ENCODE measurements at regions of chr11 and their contacts with region 1.

Region 1: GRCh38 chr11:112588252-112588694 is 327.6 kb upstream of the PLET1 start:
- DNase-seq: peak; percentile 59
- H3K4me3 Mint-ChIP-seq: no peak overlapping the region
- H3K27ac Mint-ChIP-seq: no peak overlapping the region
- H3K4me1 Mint-ChIP-seq: no peaks in the 10 kb centered on the region
- H3K27me3 Mint-ChIP-seq: no peaks in the 10 kb centered on the region
- CTCF ChIP-seq: no peak

Region 2: DNA sequence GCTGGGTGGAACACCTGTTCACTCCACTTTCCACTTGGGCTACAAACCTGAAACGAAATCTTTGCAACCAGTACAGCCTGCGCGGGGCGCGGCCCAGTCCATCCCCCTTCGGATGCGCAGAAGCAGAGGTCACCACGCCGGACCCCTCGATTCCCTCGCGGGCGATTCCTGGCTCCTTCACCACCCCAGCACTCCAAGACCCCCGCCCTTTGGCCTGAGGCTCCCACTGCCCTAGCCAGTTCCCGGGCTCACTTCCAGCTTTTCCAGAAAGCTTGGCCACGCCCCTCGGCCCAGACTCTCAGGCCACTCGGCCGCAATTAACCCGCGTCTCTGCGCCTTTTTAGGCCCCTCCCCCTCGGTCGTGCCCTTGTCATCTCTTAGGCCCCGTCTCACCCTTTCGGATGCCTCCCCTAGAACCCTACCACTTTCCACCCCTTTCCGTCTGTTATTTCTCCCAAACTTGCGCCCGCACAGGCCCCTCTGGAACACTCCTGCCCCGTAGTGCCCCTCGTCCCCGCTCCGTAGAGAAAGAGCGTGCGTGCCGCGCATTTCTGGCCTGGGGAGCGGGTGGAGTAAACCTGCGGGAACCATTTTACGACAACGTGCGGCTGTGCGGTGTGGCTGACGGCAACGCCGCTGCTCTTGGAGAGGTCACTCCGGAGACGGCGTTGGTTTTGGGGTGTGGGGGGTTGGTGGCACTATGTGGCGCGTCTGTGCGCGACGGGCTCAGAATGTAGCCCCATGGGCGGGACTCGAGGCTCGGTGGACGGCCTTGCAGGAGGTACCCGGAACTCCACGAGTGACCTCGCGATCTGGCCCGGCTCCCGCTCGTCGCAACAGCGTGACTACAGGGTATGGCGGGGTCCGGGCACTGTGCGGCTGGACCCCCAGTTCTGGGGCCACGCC is 563.2 kb before region 1 on chr11 and contains the start of gene DLAT:
- CTCF ChIA-PET with region 1: no interaction called
- intact Hi-C with region 1: no loop called
- DNase-seq: peak; percentile 75
- H3K4me3 Mint-ChIP-seq: peak within 1 kb of the TSS; percentile 93
- H3K27ac Mint-ChIP-seq: peak within 1 kb of the TSS; percentile 80
- H3K4me1 Mint-ChIP-seq: no peaks in the 10 kb centered on the region
- H3K27me3 Mint-ChIP-seq: no peaks in the 10 kb centered on the region
- CTCF ChIP-seq: no peak
- total RNA-seq, gene DLAT: 25.4 and 27.4 TPM in 2 replicates

Region 3: GRCh38 chr11:112219476-112220232 is 368.6 kb before region 1 on chr11:
- CTCF ChIA-PET with region 1: no interaction called
- intact Hi-C with region 1: loop called (anchors 2 kb)
- DNase-seq: peak; percentile 33
- H3K4me3 Mint-ChIP-seq: no peak overlapping the region
- H3K27ac Mint-ChIP-seq: no peak overlapping the region
- H3K4me1 Mint-ChIP-seq: peaks cover 8% of the 10 kb centered on the region
- H3K27me3 Mint-ChIP-seq: no peaks in the 10 kb centered on the region
- CTCF ChIP-seq: peak; percentile 44

Region 4: GRCh38 chr11:112321521-112322172 is 266.6 kb before region 1 on chr11:
- CTCF ChIA-PET with region 1: no interaction called
- intact Hi-C with region 1: no loop called
- DNase-seq: peak; percentile 73
- H3K4me3 Mint-ChIP-seq: no peak overlapping the region
- H3K27ac Mint-ChIP-seq: no peak overlapping the region
- H3K4me1 Mint-ChIP-seq: peaks cover 38% of the 10 kb centered on the region
- H3K27me3 Mint-ChIP-seq: no peaks in the 10 kb centered on the region
- CTCF ChIP-seq: no peak

Region 5: GRCh38 chr11:112537026-112537425 is 51.2 kb before region 1 on chr11:
- CTCF ChIA-PET with region 1: no interaction called
- intact Hi-C with region 1: no loop called
- DNase-seq: no peak
- H3K4me3 Mint-ChIP-seq: no peak overlapping the region
- H3K27ac Mint-ChIP-seq: no peak overlapping the region
- H3K4me1 Mint-ChIP-seq: no peaks in the 10 kb centered on the region
- H3K27me3 Mint-ChIP-seq: peaks cover 30% of the 10 kb centered on the region
- CTCF ChIP-seq: no peak

Region 6: DNA sequence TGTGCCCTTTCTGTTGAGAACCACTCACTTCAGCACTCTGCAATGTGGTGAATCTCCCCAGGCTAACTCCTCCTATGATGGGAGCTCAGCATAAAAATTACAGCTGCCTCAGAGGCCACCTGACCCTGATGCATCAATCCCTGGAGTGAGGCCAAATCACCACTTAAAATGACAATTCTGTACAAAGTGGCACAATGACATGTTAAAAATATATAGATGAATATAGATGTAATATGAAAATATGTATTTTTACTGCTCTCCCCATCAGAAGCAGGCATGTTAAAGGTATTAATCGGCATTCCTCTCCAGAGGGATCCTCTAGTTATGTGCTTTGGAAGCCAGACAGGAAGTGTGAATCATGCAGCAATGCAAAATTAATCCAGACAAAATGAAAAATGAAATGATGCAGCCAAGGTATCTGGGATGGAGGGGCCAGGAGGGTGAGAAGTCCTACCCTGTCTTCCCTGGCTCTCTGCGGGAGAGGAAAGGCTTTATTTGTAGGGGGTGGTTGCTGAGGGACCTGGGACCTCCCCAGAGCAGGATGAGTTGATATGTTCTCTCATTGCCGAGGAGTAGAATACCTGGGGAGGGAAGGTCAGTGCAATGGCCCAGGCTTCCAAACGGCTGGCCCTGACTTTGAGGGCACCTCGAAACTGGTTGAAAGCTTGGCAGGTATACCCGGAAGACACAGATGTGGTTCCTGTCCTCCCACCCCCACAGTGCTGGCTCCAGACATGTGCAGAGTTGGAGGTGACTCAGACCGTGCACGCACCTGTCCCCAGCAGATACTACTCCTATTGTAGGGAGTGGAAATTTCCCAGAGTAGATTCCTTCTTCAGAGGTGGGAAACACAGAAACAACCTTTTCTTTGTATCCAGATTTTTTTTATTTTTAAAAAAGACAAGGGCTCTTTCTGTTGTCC is 25.0 kb after region 1 on chr11:
- CTCF ChIA-PET with region 1: interaction called, 12 read pairs
- intact Hi-C with region 1: no loop called
- DNase-seq: peak; percentile 88
- H3K4me3 Mint-ChIP-seq: peak overlapping the region; percentile 50
- H3K27ac Mint-ChIP-seq: peak overlapping the region; percentile 98
- H3K4me1 Mint-ChIP-seq: peaks cover 58% of the 10 kb centered on the region
- H3K27me3 Mint-ChIP-seq: no peaks in the 10 kb centered on the region
- CTCF ChIP-seq: no peak

Region 7: GRCh38 chr11:112762707-112763090 is 174.4 kb after region 1 on chr11:
- CTCF ChIA-PET with region 1: no interaction called
- intact Hi-C with region 1: no loop called
- DNase-seq: no peak
- H3K4me3 Mint-ChIP-seq: no peak overlapping the region
- H3K27ac Mint-ChIP-seq: no peak overlapping the region
- H3K4me1 Mint-ChIP-seq: peaks cover 4% of the 10 kb centered on the region
- H3K27me3 Mint-ChIP-seq: no peaks in the 10 kb centered on the region
- CTCF ChIP-seq: no peak

Region 8: GRCh38 chr11:112795142-112795815 is 207.0 kb after region 1 on chr11:
- CTCF ChIA-PET with region 1: interaction called, 36 read pairs
- intact Hi-C with region 1: loop called (anchors 1 kb)
- DNase-seq: peak; percentile 70
- H3K4me3 Mint-ChIP-seq: no peak overlapping the region
- H3K27ac Mint-ChIP-seq: no peak overlapping the region
- H3K4me1 Mint-ChIP-seq: peaks cover 9% of the 10 kb centered on the region
- H3K27me3 Mint-ChIP-seq: no peaks in the 10 kb centered on the region
- CTCF ChIP-seq: no peak

Region 9: DNA sequence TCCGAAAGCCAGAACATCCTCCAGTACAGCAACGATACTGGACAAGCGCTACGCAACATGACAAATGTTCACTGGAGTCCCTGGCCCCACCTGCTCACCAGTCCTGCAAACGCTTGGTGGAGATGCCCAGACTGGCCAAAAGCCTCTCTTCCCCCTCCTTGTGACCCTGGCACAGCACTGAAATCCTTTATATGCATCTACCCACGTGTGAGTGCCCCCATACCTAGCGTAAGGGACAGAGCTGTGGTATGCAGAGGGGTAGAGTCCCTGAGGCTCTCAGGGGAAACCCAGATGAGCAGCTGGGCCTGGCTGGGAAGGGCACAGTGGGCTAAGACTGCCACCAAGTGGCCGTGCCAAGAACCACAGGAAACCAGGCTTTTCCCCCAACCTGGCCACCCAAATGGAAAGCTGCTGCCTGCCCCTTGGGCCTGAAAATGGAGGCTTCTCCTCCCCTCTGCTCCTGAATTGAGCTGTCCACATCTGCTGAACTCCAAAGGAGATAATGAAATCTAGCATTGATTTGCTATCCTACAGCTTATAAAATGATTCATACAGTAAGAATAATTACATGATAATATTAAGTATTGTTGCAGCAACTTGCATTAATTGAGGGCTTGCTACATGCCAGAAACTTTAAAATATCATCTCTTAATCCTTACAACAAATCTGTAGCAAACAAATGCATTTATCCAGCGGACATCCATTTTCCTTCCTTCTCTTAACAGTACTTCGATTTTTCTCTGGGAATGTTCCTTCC is 701.3 kb after region 1 on chr11:
- CTCF ChIA-PET with region 1: interaction called, 12 read pairs
- intact Hi-C with region 1: loop called (anchors 1 kb)
- DNase-seq: peak; percentile 59
- H3K4me3 Mint-ChIP-seq: no peak overlapping the region
- H3K27ac Mint-ChIP-seq: no peak overlapping the region
- H3K4me1 Mint-ChIP-seq: peaks cover 9% of the 10 kb centered on the region
- H3K27me3 Mint-ChIP-seq: peaks cover 24% of the 10 kb centered on the region
- CTCF ChIP-seq: peak; percentile 61

Measured in Calu3 (cell line).